Heart right ventricle (tissue), 16 donors: ENCODE measurements at regions of chr9 and their contacts with region 1.

Region 1: DNA sequence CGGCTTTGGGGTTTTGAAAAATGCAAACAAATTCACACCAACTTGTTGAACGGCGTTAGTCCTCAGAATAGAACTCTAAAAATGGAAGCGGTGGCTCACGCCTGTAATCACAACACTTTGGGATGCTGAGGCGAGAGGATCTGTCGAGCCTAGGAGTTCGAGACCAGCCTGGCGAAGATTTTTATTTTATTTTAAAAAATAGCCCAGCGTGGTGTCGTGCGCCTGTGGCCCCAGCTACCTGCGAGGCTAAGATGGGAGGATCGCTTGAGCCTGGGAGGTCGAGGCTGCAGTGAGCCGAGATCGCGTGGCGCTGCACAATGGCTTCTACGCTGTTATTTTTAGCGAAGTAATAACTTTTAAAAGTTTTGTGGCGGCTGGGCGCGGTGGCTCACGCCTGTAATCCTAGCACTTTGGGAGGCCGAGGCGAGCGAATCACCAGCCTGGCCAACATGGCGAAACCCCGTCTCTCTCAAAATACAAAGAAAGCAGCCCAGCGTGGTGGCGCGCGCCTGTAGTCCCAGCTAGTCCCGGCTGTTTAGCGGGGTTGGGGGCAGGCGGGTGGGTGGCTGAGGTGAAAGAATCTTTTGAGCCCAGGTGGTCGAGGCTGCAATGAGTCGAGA is 699 bp upstream of the PLIN2 start:
- DNase-seq: peak; percentile 16 to 37
- ATAC-seq: peak; percentile 15 to 57 (median 40)
- H3K4me3 ChIP-seq: peak overlapping the region; percentile 66 to 97 (median 88)
- H3K27ac ChIP-seq: peak overlapping the region; percentile 95 to 100 (median 97)
- H3K4me1 ChIP-seq: peaks cover 2 to 64% (median 36%) of the 10 kb centered on the region in 9 donors
- H3K27me3 ChIP-seq: no peaks in the 10 kb centered on the region
- CTCF ChIP-seq: no peak

Region 2: DNA sequence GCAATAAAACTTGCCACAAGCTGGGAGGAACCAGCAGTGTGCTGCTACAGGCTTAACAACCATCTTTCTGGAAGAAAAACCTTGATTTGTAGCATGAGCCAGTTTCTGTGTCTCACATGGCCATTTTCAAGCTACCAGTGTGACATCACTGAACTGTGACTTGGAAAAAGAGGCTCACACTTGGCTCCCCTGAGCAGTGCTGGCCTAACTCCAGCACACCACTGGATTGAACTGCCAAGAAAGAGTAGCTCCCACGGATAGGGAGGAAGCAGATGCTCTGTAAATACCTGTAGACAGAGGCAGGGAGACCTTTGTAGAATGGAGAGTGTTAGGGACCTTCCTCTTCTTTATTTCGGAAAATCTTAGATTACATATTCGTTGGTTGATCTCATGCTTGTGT is 1351.3 kb before region 1 on chr9:
- intact Hi-C with region 1: no loop called
- DNase-seq: peak; percentile 32 to 48
- ATAC-seq: peak; percentile 55 to 98 (median 92)
- H3K4me3 ChIP-seq: no peak overlapping the region
- H3K27ac ChIP-seq: no peak overlapping the region
- H3K4me1 ChIP-seq: peaks cover 0 to 9% (median 0%) of the 10 kb centered on the region in 9 donors
- H3K27me3 ChIP-seq: no peaks in the 10 kb centered on the region
- CTCF ChIP-seq: no peak

Region 3: DNA sequence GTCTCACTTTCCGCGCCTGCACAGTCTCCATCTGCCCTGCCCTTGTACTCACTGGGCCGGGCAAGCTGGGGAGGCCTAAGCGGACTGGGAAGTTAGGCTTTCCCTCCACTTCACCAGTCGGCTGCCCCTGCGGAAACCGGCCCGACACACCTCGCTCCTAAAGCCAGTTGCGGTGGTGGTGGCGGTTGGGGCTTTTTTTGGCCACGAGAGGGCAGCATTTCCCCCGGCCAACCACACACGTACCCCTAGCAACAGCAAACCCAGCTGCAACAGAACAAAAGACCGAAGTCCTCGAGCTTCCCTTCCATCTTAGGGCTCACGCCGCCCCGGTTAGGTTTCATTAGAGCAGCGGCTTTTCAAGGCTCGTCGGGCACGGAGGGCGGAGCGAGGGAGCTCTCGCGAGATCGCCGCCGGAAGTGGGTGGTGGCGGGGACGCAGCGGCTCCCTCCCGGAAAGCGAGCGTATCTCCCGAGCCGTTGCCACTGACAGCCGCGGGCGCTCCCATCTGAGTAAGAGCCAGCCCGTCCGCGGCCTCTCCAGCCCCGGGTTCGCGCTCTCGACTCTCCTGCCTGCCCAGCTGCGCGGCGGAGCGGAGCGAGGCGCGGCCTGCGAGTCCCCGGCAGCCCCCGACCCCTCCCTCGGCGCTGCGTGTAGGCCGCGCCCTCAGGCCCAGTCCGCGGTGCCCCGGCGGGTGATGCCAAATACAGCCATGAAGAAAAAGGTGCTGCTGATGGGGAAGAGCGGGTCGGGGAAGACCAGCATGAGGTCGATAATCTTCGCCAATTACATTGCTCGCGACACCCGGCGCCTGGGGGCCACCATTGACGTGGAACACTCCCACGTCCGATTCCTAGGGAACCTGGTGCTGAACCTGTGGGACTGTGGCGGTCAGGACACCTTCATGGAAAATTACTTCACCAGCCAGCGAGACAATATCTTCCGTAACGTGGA is 78.8 kb before region 1 on chr9 and contains the start of gene RRAGA:
- intact Hi-C with region 1: loop called in 1 of 10 experiments (anchors 2 kb)
- DNase-seq: peak; percentile 94 to 95
- ATAC-seq: peak; percentile 96 to 98 (median 97)
- H3K4me3 ChIP-seq: peak within 1 kb of the TSS; percentile 64 to 89 (median 80)
- H3K27ac ChIP-seq: peak within 1 kb of the TSS; percentile 88 to 97 (median 95)
- H3K4me1 ChIP-seq: peaks cover 4 to 52% (median 31%) of the 10 kb centered on the region in 9 donors
- H3K27me3 ChIP-seq: no peaks in the 10 kb centered on the region
- CTCF ChIP-seq: peak; percentile 79 to 94 (median 87)
- total RNA-seq, gene RRAGA: 74.7 to 97.8 (median 81.3) TPM

Region 4: GRCh38 chr9:19102631-19103345 is 25.2 kb before region 1 on chr9 and contains the start of gene HAUS6:
- intact Hi-C with region 1: loop called in 2 of 10 experiments (anchors 1 to 2 kb)
- DNase-seq: peak; percentile 95 to 97
- ATAC-seq: peak; percentile 99 to 100 (median 100)
- H3K4me3 ChIP-seq: peak within 1 kb of the TSS; percentile 64 to 91 (median 78)
- H3K27ac ChIP-seq: peak within 1 kb of the TSS; percentile 44 to 91 (median 90)
- H3K4me1 ChIP-seq: peaks cover 0 to 26% (median 17%) of the 10 kb centered on the region in 9 donors
- H3K27me3 ChIP-seq: no peaks in the 10 kb centered on the region
- CTCF ChIP-seq: peak; percentile 22 to 71 (median 50)
- total RNA-seq, gene HAUS6: 4.9 to 10.4 (median 7.2) TPM

Region 5: GRCh38 chr9:19161257-19162025 is 33.5 kb after region 1 on chr9:
- intact Hi-C with region 1: loop called in 3 of 10 experiments (anchors 2 to 5 kb)
- DNase-seq: no peak
- ATAC-seq: peak; percentile 33 to 94 (median 72)
- H3K4me3 ChIP-seq: peak overlapping the region in 1 of 10 donors; percentile 3
- H3K27ac ChIP-seq: peak overlapping the region in 6 of 10 donors; percentile 2 to 85 (median 49)
- H3K4me1 ChIP-seq: peaks cover 0 to 49% (median 11%) of the 10 kb centered on the region in 9 donors
- H3K27me3 ChIP-seq: no peaks in the 10 kb centered on the region
- CTCF ChIP-seq: no peak

Region 6: DNA sequence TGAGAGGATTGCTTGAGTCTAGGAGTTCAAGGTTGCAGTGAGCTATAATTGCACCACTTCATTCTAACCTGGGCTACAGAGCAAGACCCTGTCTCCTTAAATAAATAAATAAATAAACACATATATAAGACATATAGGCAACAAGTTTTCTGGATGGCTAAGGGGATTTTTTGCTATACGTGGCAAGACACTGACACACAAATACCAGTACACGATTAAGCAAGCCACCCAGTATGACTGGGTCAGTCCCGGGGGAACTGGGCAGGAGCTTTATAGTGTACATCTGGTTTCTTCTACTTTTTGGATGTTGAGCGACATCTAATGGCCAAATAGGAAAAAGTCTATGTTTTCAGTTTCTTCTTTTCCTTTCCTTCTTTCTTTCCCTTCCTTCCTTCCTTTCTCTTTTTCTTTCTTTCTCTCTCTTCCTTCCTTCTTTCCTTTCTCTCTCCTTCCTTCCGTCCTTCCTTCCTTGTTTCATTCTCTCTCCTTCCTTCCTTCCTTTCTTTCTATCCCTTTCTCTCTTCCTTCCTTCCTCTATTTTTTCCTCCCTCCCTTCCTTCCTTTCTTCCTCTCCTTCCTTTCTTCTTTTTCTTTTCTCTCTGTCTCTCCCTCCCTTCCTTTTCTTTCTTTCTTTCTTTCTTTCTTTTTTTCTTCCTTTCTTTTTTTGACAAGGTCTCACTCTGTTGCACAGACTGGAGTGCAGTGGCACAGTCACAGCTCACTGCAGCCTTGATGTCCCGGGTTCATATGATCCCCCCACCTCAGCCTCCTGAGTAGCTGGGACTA is 46.3 kb after region 1 on chr9:
- intact Hi-C with region 1: loop called in 5 of 10 experiments (anchors 1 to 10 kb)
- DNase-seq: peak; percentile 50 to 64
- ATAC-seq: peak; percentile 72 to 96 (median 86)
- H3K4me3 ChIP-seq: peak overlapping the region in 2 of 10 donors; percentile 2 to 7
- H3K27ac ChIP-seq: peak overlapping the region in 1 of 10 donors; percentile 46
- H3K4me1 ChIP-seq: peaks cover 0 to 30% (median 11%) of the 10 kb centered on the region in 9 donors
- H3K27me3 ChIP-seq: no peaks in the 10 kb centered on the region
- CTCF ChIP-seq: peak; percentile 27 to 80 (median 71)

Region 7: DNA sequence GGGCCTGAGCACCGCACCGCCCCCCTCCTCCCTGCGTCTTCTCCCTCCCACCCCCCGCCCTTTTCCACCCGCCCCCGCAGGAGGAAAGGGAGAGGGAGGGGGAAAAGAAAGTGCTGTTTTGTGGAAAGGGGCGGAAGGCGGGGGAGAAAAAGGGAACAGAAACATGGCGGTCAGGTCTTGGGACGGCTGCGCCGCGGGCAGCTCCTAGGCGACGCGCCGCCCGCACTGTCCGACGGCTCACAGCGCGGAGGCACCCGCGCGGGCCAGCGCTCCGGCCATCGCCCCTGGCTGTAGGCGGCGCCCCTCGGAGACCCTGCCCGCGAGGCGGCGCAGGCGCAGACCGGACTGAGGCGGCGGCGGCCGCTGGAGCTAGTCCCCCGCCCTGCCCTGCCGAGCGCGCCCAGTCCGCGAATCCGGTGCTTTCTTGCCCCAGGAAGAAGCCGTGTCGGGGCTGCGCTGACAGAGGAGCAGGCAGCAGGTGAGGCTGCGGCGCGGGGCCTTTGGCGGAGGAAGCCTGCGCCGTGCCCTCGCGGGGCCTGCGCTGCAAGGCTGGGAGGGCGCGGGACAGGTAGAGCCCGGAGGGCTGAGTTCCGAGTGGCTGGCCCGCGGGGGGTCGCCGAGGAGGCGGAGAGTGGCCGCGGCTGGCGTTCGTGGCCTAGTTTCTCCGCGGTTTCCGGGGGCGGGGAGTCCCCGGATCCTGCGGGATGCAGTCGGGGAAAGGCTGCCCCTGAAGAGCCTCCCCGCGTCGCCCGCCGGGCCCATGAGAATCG is 102.5 kb after region 1 on chr9 and contains the start of gene DENND4C:
- intact Hi-C with region 1: loop called in 4 of 10 experiments (anchors 5 to 10 kb)
- DNase-seq: peak; percentile 85 to 90
- ATAC-seq: peak; percentile 88 to 95 (median 94)
- H3K4me3 ChIP-seq: peak within 1 kb of the TSS; percentile 83 to 100 (median 98)
- H3K27ac ChIP-seq: peak within 1 kb of the TSS; percentile 96 to 99 (median 98)
- H3K4me1 ChIP-seq: peaks cover 0 to 42% (median 31%) of the 10 kb centered on the region in 9 donors
- H3K27me3 ChIP-seq: no peaks in the 10 kb centered on the region
- CTCF ChIP-seq: peak in 3 of 9 donors; percentile 6 to 44 (median 10)
- total RNA-seq, gene DENND4C: 21.7 to 28.3 (median 23.8) TPM

Region 8: GRCh38 chr9:19252174-19252884 is 124.3 kb after region 1 on chr9:
- intact Hi-C with region 1: no loop called
- DNase-seq: no peak
- ATAC-seq: no peak
- H3K4me3 ChIP-seq: no peak overlapping the region
- H3K27ac ChIP-seq: no peak overlapping the region
- H3K4me1 ChIP-seq: peaks cover 0 to 34% (median 18%) of the 10 kb centered on the region in 9 donors
- H3K27me3 ChIP-seq: no peaks in the 10 kb centered on the region
- CTCF ChIP-seq: no peak

Region 9: GRCh38 chr9:19498015-19498414 is 370.0 kb after region 1 on chr9:
- intact Hi-C with region 1: no loop called
- DNase-seq: no peak
- ATAC-seq: peak in 1 of 8 donors; percentile 38
- H3K4me3 ChIP-seq: no peak overlapping the region
- H3K27ac ChIP-seq: peak overlapping the region in 1 of 10 donors; percentile 52
- H3K4me1 ChIP-seq: peaks cover 0 to 11% (median 6%) of the 10 kb centered on the region in 9 donors
- H3K27me3 ChIP-seq: peaks cover 0 to 9% (median 0%) of the 10 kb centered on the region in 7 donors
- CTCF ChIP-seq: no peak